Left cardiac atrium (tissue), 4 donors: ENCODE measurements at regions of chr18 and their contacts with region 1.

Region 1: DNA sequence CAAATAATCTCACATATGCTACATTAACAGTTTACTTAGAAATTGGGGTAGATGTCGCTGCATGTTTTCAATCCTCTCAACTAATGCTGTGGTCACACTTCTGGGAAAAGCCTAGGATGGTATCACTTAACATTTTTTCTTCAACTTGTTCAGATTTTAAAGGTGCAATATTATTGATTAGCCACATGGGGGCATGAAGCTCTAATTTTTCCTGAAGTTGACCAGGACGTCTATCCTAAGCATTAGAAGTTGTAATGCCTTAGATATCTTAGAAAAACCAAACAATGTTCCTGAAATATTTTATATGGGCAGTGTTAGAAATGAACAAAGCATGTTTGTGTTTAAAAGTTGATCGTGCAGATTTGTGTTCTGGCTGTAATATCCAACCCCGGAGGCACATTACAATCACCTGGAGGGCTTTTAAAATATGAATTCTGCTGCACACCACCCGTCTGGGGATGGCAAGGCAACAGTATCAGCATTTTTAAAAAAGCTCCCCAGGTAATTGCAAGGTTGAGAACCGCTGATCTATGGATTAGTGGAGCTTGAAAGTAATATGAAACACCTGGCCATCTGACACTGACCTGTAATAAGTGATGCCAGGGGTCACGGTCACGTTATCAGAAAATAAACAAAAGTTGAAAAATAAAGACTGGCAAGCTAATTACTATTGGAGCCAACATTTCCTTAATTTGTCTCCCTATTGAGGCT is 100.5 kb upstream of the LMAN1 start:
- DNase-seq: no peak
- ATAC-seq: peak; percentile 35 to 64

Region 2: DNA sequence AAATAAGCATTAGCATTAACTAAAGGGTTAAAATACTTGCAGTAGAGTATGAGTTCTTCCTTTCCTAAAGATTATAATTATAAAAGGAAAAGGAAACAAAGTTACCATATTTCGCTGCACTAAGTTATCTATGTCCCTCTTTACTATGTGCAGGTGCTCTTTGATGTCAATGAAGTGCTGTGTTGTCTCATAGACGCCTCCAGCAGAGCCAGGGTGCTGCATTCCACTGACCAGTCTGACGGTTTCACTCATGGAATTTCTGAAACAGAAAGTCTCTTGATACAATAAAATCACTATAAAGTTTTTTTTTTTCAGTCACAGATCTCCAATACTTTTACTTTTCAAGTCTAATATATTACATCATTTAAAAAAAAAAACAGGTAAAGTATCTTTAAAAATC is 126.5 kb before region 1 on chr18:
- intact Hi-C with region 1: no loop called
- DNase-seq: no peak
- ATAC-seq: peak in 1 of 2 donors; percentile 55

Region 3: GRCh38 chr18:59376351-59376935 is 83.1 kb before region 1 on chr18:
- intact Hi-C with region 1: no loop called
- DNase-seq: no peak
- ATAC-seq: no peak

Region 4: GRCh38 chr18:59612381-59612780 is 152.9 kb after region 1 on chr18:
- intact Hi-C with region 1: loop called in 1 of 2 experiments (anchors 10 kb)
- DNase-seq: no peak
- ATAC-seq: peak; percentile 61 to 80

Region 5: GRCh38 chr18:59697236-59697932 is 237.9 kb after region 1 on chr18 and contains the start of gene CCBE1:
- intact Hi-C with region 1: loop called in 1 of 2 experiments (anchors 10 kb)
- DNase-seq: peak; percentile 58
- ATAC-seq: peak; percentile 85 to 94
- total RNA-seq, gene CCBE1: 1.2 to 2.9 TPM